Naive thymus-derived CD4-positive, alpha-beta T cell (primary cell): ENCODE measurements at regions of chr9 and their contacts with region 1.

Region 1: DNA sequence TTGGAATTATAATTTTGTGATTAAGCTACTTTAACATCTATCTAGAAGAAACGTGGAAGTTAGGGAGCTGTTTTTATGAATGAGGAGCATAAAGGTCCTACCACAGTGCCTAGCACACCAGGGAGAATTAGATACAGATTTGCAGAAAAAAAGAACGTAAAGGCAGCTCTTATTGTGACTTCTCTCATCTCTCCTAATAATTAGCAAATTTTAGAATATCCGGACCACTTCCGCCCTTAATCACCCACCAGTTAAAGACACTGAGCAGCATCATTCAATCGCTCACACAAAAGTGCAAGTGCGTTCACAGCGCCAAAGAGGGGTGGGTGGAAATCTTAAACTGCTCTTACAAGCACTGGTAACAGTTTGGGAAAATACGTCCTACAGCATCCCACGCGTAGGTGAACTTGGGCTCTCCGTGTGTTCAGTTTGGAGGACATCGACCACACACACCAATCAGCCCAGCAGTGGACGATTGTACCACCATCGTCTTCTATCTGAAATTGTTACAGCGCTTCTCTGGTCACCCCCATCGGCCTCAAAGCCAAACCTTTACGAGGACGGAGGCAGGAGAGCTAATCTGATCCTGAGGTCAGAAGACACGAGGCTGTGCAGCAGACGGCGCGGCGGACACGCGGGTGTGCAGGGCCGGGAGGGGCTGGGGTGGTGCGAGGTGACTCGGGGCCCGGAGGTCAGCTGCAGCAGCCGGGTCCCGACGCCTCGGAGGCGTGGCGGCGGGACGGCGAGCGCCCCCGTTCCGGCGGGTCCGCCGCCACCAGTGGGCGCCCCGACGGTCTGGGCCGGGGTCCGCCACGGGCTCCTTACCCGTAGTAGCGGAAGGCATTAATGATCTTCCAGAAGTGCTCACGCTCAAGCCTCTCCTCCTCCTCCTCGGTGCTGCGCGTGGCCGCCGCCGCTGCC is 646 bp downstream of the CARNMT1 start:
- DNase-seq: peak in 8 of 9 donors; percentile 27 to 66 (median 35)
- ATAC-seq: peak; percentile 18
- H3K4me3 ChIP-seq: peak overlapping the region; percentile 69
- H3K4me3 Mint-ChIP-seq: peak overlapping the region; percentile 80 to 98 (median 96)
- H3K27ac ChIP-seq: peak overlapping the region; percentile 90
- H3K27ac Mint-ChIP-seq: peak overlapping the region; percentile 84 to 98 (median 95)
- H3K4me1 ChIP-seq: peaks cover 34 to 42% of the 10 kb centered on the region in 2 donors
- H3K4me1 Mint-ChIP-seq: peaks cover 30 to 54% (median 48%) of the 10 kb centered on the region in 7 donors
- H3K27me3 ChIP-seq: no peaks in the 10 kb centered on the region
- H3K27me3 Mint-ChIP-seq: peaks cover 0 to 3% (median 0%) of the 10 kb centered on the region in 5 donors

Region 2: DNA sequence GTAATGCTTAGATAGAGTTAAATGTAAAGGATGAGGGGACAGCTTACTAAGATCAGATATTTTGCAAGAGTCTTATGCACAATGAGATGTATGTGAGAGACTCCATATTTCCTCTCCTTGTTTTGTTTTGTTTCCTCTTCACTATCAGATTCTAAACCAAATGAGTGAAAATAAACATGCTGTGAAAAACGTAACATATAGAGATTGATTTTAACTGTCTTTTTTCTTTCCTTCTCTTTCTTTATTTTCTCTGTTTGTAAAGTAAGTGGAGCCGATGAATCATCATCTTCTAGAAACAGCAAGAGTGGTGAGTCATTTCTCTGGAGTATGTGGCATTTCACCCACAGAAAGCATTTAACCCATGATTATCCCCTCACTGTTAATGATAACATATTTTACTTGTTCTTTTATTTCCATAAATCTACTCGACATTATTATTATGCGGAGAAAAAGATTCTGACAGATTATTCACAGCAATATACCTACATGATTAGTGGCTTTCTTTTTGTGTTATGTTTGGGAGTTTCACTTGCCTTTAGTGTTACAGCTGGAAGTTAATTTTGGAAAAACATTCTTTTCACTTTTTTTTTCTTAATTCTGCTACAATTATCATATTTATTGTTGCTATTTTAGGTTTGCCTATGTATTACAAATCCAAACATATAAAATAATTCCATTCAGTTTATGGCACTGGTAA is 1877.9 kb before region 1 on chr9:
- CTCF ChIA-PET with region 1: no interaction called
- POLR2A ChIA-PET with region 1: no interaction called
- intact Hi-C with region 1: loop called in 1 of 2 experiments (anchors 10 kb)
- DNase-seq: peak in 1 of 9 donors; percentile 57
- ATAC-seq: peak; percentile 49
- H3K4me3 ChIP-seq: peak overlapping the region; percentile 17
- H3K4me3 Mint-ChIP-seq: peak overlapping the region in 9 of 10 donors; percentile 8 to 79 (median 60)
- H3K27ac ChIP-seq: peak overlapping the region; percentile 32
- H3K27ac Mint-ChIP-seq: peak overlapping the region; percentile 71 to 96 (median 78)
- H3K4me1 ChIP-seq: peaks cover 28 to 32% of the 10 kb centered on the region in 2 donors
- H3K4me1 Mint-ChIP-seq: peaks cover 34 to 80% (median 54%) of the 10 kb centered on the region in 7 donors
- H3K27me3 ChIP-seq: no peaks in the 10 kb centered on the region
- H3K27me3 Mint-ChIP-seq: peaks cover 0 to 2% (median 0%) of the 10 kb centered on the region in 5 donors

Region 3: GRCh38 chr9:74952281-74953151 is 74.9 kb before region 1 on chr9 and contains the start of gene C9orf40:
- CTCF ChIA-PET with region 1: interaction called, 5 read pairs
- POLR2A ChIA-PET with region 1: interaction called, 24 read pairs
- intact Hi-C with region 1: loop called (anchors 1 kb)
- DNase-seq: peak; percentile 80 to 92 (median 88)
- ATAC-seq: peak; percentile 93
- H3K4me3 ChIP-seq: peak within 1 kb of the TSS; percentile 89
- H3K4me3 Mint-ChIP-seq: peak within 1 kb of the TSS; percentile 87 to 99 (median 97)
- H3K27ac ChIP-seq: peak within 1 kb of the TSS; percentile 86
- H3K27ac Mint-ChIP-seq: peak within 1 kb of the TSS; percentile 89 to 97 (median 95)
- H3K4me1 ChIP-seq: peaks cover 0 to 7% of the 10 kb centered on the region in 2 donors
- H3K4me1 Mint-ChIP-seq: peaks cover 0 to 46% (median 30%) of the 10 kb centered on the region in 7 donors
- H3K27me3 ChIP-seq: no peaks in the 10 kb centered on the region
- H3K27me3 Mint-ChIP-seq: no peaks in the 10 kb centered on the region
- total RNA-seq, gene C9orf40: 1.8 to 13.6 (median 6.6) TPM

Region 4: DNA sequence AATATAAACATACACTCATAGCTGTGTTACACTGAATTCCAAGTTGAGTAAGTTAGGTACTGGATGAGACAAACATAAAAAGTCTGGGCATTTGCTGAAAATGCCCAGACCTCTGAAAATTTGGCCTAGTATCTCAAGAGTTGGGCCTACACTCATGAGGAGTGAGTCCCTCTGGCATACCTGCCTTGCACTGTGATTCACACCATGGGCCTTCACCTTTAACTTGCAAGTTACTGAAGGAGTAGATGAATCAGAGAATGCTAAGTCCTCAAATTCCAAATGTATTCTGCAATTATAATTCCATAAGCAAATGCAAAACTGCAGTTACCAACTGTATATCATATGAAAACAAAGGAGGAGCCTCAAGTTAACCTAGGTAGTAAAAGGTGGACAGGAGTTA is 42.4 kb before region 1 on chr9:
- CTCF ChIA-PET with region 1: no interaction called
- POLR2A ChIA-PET with region 1: no interaction called
- intact Hi-C with region 1: no loop called
- DNase-seq: no peak
- ATAC-seq: no peak
- H3K4me3 ChIP-seq: no peak overlapping the region
- H3K4me3 Mint-ChIP-seq: no peak overlapping the region
- H3K27ac ChIP-seq: no peak overlapping the region
- H3K27ac Mint-ChIP-seq: peak overlapping the region in 1 of 9 donors; percentile 78
- H3K4me1 ChIP-seq: no peaks in the 10 kb centered on the region
- H3K4me1 Mint-ChIP-seq: peaks cover 0 to 7% (median 0%) of the 10 kb centered on the region in 7 donors
- H3K27me3 ChIP-seq: no peaks in the 10 kb centered on the region
- H3K27me3 Mint-ChIP-seq: no peaks in the 10 kb centered on the region

Region 5: DNA sequence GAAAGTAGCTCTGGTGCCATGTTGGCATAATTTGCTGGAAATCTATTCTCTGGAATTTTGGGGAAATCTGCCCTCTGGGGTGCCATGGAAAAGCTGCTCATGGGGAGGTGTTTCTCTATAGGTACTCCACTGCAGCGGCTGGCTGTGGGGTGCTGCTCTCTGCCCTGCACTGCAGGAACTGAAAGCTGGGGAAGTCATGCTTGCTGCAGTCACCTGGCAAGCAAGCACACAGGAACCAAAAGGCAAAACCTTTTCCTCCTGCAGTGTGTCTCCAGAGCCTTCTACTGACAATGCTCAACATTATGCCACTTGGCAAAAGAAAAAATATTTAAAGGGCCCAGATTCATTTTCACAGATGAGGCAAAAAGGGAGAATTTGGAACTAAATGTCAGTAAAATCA is 26.4 kb after region 1 on chr9:
- CTCF ChIA-PET with region 1: interaction called, 4 read pairs
- POLR2A ChIA-PET with region 1: no interaction called
- intact Hi-C with region 1: loop called in 1 of 2 experiments (anchors 2 kb)
- DNase-seq: no peak
- ATAC-seq: no peak
- H3K4me3 ChIP-seq: no peak overlapping the region
- H3K4me3 Mint-ChIP-seq: no peak overlapping the region
- H3K27ac ChIP-seq: no peak overlapping the region
- H3K27ac Mint-ChIP-seq: no peak overlapping the region
- H3K4me1 ChIP-seq: no peaks in the 10 kb centered on the region
- H3K4me1 Mint-ChIP-seq: no peaks in the 10 kb centered on the region
- H3K27me3 ChIP-seq: no peaks in the 10 kb centered on the region
- H3K27me3 Mint-ChIP-seq: no peaks in the 10 kb centered on the region

Region 6: GRCh38 chr9:75148561-75148960 is 121.1 kb after region 1 on chr9:
- CTCF ChIA-PET with region 1: interaction called, 3 read pairs
- POLR2A ChIA-PET with region 1: interaction called, 8 read pairs
- intact Hi-C with region 1: loop called (anchors 1 to 2 kb)
- DNase-seq: peak in 1 of 9 donors; percentile 32
- ATAC-seq: no peak
- H3K4me3 ChIP-seq: peak overlapping the region; percentile 5
- H3K4me3 Mint-ChIP-seq: peak overlapping the region in 9 of 10 donors; percentile 20 to 88 (median 82)
- H3K27ac ChIP-seq: peak overlapping the region; percentile 47
- H3K27ac Mint-ChIP-seq: peak overlapping the region; percentile 81 to 97 (median 86)
- H3K4me1 ChIP-seq: peaks cover 66 to 69% of the 10 kb centered on the region in 2 donors
- H3K4me1 Mint-ChIP-seq: peaks cover 47 to 96% (median 86%) of the 10 kb centered on the region in 7 donors
- H3K27me3 ChIP-seq: no peaks in the 10 kb centered on the region
- H3K27me3 Mint-ChIP-seq: no peaks in the 10 kb centered on the region

Region 7: GRCh38 chr9:76458903-76459690 is 1431.7 kb after region 1 on chr9 and contains the start of gene GCNT1:
- CTCF ChIA-PET with region 1: no interaction called
- POLR2A ChIA-PET with region 1: no interaction called
- intact Hi-C with region 1: loop called in 1 of 2 experiments (anchors 2 kb)
- DNase-seq: peak; percentile 78 to 98 (median 86)
- ATAC-seq: peak; percentile 98
- H3K4me3 ChIP-seq: peak within 1 kb of the TSS; percentile 92
- H3K4me3 Mint-ChIP-seq: peak within 1 kb of the TSS; percentile 81 to 96 (median 92)
- H3K27ac ChIP-seq: no peak within 1 kb of the TSS
- H3K27ac Mint-ChIP-seq: peak within 1 kb of the TSS in 8 of 9 donors; percentile 7 to 81 (median 61)
- H3K4me1 ChIP-seq: peaks cover 3 to 11% of the 10 kb centered on the region in 2 donors
- H3K4me1 Mint-ChIP-seq: peaks cover 16 to 34% (median 20%) of the 10 kb centered on the region in 7 donors
- H3K27me3 ChIP-seq: no peaks in the 10 kb centered on the region
- H3K27me3 Mint-ChIP-seq: peaks cover 0 to 3% (median 0%) of the 10 kb centered on the region in 5 donors
- total RNA-seq, gene GCNT1: 1.4 to 8.9 (median 1.7) TPM